T47D (cell line): ENCODE measurements at regions of chr15 and their contacts with region 1.

Region 1: GRCh38 chr15:23642413-23643044 is 5.1 kb downstream of the MAGEL2 start:
- DNase-seq: peak; percentile 64 to 81

Region 2: DNA sequence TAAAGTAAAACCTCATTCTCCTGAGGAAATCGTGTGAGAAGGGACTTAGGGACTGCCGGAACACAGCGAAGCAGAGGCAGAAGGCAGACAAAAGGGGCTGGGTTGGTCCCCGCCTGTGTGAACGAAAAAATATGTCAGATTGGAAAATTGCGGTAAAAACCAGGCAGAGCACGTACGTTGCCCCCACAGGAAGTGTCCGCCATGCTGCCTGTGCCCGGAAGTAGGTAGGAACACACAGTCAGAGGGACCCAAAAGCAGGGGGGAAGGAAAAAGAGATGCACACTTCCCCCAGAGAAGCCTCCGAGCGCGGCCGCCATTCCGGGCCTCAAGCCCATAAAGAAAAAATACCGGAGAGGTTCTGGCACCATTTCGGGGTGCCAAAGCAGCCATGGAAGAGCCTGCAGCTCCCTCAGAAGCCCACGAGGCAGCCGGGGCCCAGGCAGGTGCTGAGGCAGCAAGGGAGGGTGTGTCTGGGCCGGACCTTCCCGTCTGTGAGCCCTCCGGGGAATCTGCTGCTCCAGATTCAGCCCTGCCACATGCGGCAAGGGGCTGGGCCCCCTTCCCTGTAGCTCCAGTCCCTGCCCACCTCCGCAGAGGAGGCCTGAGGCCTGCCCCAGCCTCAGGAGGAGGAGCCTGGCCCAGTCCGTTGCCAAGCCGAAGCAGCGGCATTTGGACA is 77.0 kb before region 1 on chr15 and contains the start of gene MKRN3:
- in situ Hi-C with region 1: no loop called
- DNase-seq: peak in 1 of 2 experiments; percentile 77

Region 3: DNA sequence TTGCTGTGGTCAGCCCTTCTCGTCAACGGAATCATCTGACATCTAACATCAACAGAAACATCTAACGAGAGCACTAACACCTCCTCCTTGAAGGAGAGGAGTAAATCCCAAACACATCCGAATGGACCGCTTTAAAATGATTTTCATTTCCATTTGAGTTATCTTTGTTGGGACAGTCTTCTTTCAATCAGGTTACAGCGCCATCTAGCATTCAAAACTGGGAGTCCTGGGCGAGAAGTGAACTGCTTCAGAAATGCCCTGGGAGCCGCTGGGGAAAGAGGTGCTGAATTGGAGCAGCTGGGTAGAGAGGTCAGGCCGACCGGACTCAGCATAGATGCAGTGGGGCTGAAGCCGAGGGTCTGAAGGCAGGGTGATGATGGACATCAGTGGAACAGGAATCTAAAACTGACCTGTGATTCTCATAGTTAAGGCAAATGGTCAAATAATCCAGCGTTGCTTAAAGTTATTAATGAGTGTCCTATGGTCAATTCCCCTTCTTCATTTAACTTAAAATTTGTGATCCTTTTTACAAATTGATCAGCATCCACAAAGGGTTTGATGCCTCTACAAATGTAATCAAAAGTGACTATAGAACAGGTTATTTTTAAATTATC is 214.6 kb after region 1 on chr15:
- in situ Hi-C with region 1: loop called (anchors 25 kb)
- DNase-seq: peak; percentile 14 to 84